GM12878 (cell line): ENCODE measurements at regions of chr15 and their contacts with region 1.

Region 1: GRCh38 chr15:53976844-53977392 is 1.3 kb upstream of the UNC13C start:
- DNase-seq: no peak
- ATAC-seq: peak; percentile 72
- H3K4me3 ChIP-seq: no peak overlapping the region
- H3K27ac ChIP-seq: no peak overlapping the region
- H3K4me1 ChIP-seq: no peaks in the 10 kb centered on the region
- H3K27me3 ChIP-seq: no peaks in the 10 kb centered on the region
- CTCF ChIP-seq: peak in 2 of 3 experiments; percentile 34 to 62; a peak in 2 of 6 replicates
- EP300 ChIP-seq: no peak
- POLR2A ChIP-seq: no peak
- RAD21 ChIP-seq: peak; percentile 24; the same call in 1 of the 2 replicates

Region 2: DNA sequence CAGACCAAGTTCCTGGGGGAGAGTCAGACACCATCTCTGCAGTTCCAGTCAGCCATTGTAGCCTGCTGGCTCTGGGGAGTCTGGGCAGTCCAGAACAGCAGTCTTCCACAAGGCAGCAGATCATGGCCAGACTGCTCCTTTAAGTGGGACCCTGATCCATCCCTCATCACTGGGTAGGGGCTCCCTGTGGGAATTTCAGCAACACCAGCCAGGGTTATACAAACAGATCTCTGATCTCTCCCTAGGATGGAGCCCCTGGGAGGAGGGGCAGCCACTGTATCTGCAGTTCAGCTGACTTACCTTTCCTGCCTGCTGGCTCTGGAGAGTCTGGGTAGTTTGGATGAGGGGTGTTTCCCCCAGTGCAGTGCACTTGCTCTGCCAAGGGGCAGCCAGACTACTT is 40.8 kb before region 1 on chr15:
- CTCF ChIA-PET with region 1: no interaction called
- POLR2A ChIA-PET with region 1: no interaction called
- RAD21 ChIA-PET with region 1: no interaction called
- SMC1A ChIA-PET with region 1: no interaction called
- in situ Hi-C with region 1: no loop called
- intact Hi-C with region 1: no loop called
- DNase-seq: no peak
- ATAC-seq: no peak
- H3K4me3 ChIP-seq: no peak overlapping the region
- H3K27ac ChIP-seq: no peak overlapping the region
- H3K4me1 ChIP-seq: no peaks in the 10 kb centered on the region
- H3K27me3 ChIP-seq: no peaks in the 10 kb centered on the region
- CTCF ChIP-seq: no peak
- EP300 ChIP-seq: no peak
- POLR2A ChIP-seq: no peak
- RAD21 ChIP-seq: no peak

Region 3: DNA sequence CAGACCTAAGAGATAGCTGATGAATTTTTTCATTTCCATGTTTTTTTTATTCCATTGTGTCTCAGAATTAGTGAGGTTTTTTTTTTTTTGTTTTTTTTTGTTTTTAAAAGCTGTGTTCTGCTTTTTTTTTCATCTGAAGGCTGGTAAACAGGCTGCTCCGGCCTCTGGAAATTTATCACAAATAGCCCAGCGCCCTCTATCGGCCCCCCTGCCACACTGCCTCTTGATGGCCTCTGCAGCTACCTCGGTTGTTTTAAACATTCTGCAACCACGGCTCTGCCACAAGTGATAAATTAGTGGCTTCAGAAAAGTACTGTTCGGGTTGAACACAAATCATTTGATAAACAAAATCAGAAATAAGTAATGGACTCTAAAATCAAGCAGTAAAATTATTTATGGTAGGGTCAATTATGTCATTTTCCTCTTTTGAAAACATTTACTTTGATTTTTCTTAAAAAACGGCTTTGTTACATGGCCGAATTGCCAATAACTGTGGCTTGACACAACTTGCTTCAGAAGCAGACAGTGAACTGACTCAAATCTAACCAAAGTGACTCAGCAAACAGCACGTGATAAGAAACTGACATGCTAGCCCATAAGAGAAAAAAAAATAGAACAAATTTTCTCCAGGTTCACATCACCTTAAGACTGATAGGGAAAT is 1132.1 kb after region 1 on chr15:
- CTCF ChIA-PET with region 1: interaction called, 25 read pairs
- POLR2A ChIA-PET with region 1: no interaction called
- RAD21 ChIA-PET with region 1: interaction called, 15 read pairs
- SMC1A ChIA-PET with region 1: interaction called, 11 read pairs
- in situ Hi-C with region 1: no loop called
- intact Hi-C with region 1: no loop called
- DNase-seq: peak; percentile 9
- ATAC-seq: peak; percentile 91
- H3K4me3 ChIP-seq: no peak overlapping the region
- H3K27ac ChIP-seq: no peak overlapping the region
- H3K4me1 ChIP-seq: no peaks in the 10 kb centered on the region
- H3K27me3 ChIP-seq: no peaks in the 10 kb centered on the region
- CTCF ChIP-seq: peak; percentile 74 to 83 (median 77)
- EP300 ChIP-seq: 0 out of 4 replicates have a peak, but pooled peaks of 1 of the 2 experiments have one; percentile 26
- POLR2A ChIP-seq: no peak
- RAD21 ChIP-seq: peak; percentile 70